Caco-2 (cell line): ENCODE measurements at regions of chr3 and their contacts with region 1.

Region 1: GRCh38 chr3:126267226-126267975 is 87.0 kb upstream of the ALDH1L1 start:
- DNase-seq: peak; percentile 92 to 94
- H3K4me3 ChIP-seq: peak overlapping the region; percentile 42
- H3K4me3 Mint-ChIP-seq: peak overlapping the region; percentile 70
- H3K27ac Mint-ChIP-seq: peak overlapping the region; percentile 90
- H3K4me1 ChIP-seq: peaks cover 49% of the 10 kb centered on the region
- H3K4me1 Mint-ChIP-seq: peaks cover 32% of the 10 kb centered on the region
- H3K27me3 ChIP-seq: no peaks in the 10 kb centered on the region
- H3K27me3 Mint-ChIP-seq: no peaks in the 10 kb centered on the region
- CTCF ChIP-seq: peak in 1 of 2 experiments; percentile 39

Region 2: DNA sequence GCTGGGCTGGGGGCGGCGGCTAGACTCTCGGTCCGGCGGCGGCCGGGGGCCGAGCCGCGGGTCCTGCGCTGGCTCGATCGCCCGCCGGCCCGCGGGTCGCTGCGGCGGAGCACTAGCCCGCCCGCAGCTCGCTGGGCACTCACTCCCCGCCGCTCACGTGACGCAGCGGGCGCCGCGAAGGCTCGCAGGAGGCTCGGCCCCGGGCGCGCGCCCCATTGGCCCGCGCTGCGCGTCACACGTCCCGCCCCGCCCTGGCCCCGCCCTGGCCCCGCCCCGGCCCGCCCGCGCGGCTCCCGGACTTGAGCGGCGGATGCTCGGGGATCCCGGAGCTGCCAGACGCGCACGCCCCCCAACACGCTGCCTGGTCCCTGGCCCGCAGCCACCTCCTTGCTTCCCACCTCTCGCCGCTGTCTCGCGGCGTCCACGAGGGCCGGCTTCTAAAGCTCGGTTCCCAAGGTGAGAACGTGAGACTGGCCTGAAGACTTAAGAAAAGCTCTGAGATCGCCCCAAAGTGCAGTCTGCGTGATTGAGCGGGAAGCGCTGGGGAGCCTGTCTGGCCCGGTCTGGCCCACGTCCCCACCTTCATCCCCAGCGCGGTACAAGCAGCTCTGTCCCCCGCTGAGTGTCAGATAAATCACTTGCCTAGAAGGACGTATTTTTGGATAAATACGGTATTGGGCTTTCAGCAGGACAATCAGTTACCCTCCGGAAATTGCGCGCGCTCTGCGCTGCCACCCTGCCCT is 90.1 kb after region 1 on chr3 and contains the start of gene KLF15:
- CTCF ChIA-PET with region 1: no interaction called
- POLR2A ChIA-PET with region 1: no interaction called
- intact Hi-C with region 1: loop called (anchors 2 kb)
- DNase-seq: peak; percentile 77 to 86
- H3K4me3 ChIP-seq: peak within 1 kb of the TSS; percentile 66
- H3K4me3 Mint-ChIP-seq: peak within 1 kb of the TSS; percentile 80
- H3K27ac Mint-ChIP-seq: peak within 1 kb of the TSS; percentile 40
- H3K4me1 ChIP-seq: peaks cover 4% of the 10 kb centered on the region; the same call in 1 of the 2 replicates
- H3K4me1 Mint-ChIP-seq: peaks cover 7% of the 10 kb centered on the region
- H3K27me3 ChIP-seq: no peaks in the 10 kb centered on the region; the same call in 1 of the 2 replicates
- H3K27me3 Mint-ChIP-seq: peaks cover 18% of the 10 kb centered on the region
- CTCF ChIP-seq: no peak
- total RNA-seq, gene KLF15: 2.7 and 3.9 TPM in 2 replicates

Region 3: DNA sequence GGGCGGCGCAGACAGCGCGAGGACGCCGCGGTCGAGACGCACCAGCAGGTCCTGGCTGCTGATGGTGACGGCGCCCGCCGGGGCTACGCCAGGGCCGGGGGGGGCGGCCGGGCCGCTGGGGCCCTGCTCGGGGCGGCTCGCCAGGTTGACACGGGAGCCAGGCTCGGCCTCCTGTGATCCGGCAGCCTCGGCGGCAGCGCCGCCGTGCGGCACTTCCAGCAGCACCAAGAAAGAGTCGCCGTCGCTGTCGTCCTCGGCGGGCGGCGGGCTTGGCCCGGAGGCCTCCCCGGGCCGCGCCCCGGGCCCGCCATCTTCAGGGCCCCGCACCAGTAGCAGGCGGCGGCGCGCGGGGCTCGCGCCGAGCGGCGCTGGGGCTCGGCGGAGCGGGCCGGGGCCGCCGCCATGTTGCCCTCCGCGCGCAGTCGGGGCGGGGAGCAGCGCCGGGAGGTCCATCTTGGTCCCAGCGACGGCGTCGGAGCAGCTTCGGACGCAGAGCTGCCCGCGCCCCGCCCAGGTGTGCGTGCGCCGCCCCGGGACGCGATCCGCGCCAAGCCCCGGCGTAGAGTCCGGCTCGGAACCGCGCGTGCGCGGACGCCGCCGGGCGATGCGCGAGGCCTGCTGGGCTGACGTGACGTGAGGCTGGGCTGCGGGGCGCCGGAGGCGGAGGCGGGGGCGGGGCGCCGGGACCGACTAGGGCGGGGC is 208.2 kb after region 1 on chr3 and contains the start of gene ZXDC:
- CTCF ChIA-PET with region 1: no interaction called
- POLR2A ChIA-PET with region 1: no interaction called
- intact Hi-C with region 1: loop called (anchors 10 kb)
- DNase-seq: peak; percentile 92 to 95
- H3K4me3 ChIP-seq: peak within 1 kb of the TSS; percentile 83
- H3K4me3 Mint-ChIP-seq: peak within 1 kb of the TSS; percentile 75
- H3K27ac Mint-ChIP-seq: peak within 1 kb of the TSS; percentile 69
- H3K4me1 ChIP-seq: peaks cover 17% of the 10 kb centered on the region
- H3K4me1 Mint-ChIP-seq: peaks cover 20% of the 10 kb centered on the region
- H3K27me3 ChIP-seq: no peaks in the 10 kb centered on the region
- H3K27me3 Mint-ChIP-seq: no peaks in the 10 kb centered on the region
- CTCF ChIP-seq: peak in 1 of 2 experiments; percentile 49
- total RNA-seq, gene ZXDC: 28.1 and 28.7 TPM in 2 replicates